Activated CD4-positive, alpha-beta memory T cell treated with anti-CD3 and anti-CD28 coated beads for 36 hours (primary cell): ENCODE measurements at regions of chr2 and their contacts with region 1.

Region 1: DNA sequence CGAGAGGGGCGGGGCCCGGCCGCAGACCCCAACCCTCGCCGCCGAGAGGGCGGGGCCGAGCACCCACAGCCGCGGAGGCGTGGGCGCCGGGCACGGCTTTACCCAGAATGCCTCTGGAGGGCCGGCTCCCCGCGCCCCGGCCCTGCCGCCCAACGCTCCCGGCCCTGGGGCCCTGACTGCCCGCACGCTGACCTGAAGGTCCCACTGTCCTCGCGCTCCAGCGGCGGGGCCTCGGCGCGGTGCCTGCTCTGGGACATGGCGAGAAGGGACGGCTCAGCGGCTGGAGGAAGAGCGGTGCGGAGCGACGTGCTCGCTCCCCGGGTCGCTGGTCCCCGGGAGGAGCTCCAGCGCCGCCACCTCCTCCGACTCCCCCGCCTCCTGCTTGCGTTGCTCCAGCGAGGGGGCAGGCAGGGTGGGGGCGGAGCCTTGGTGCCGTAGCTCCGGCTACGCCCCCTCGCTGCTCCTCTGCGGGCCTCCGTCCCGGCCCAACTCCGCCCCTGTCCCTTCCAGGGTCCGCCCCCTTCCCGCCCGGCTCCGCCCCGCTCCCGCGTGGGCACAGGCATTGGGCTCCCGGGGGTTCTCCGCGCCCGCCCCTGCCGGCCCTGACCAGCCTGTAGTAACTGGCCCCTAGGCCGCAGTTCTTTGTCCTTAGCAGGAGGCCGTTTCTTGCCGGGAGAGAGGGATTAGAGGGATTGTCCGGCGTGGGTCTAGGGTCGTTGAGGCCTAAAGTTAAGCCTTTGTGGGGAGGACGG is at the starts of genes PJVK and PRKRA:
- DNase-seq: peak; percentile 97
- H3K4me3 Mint-ChIP-seq: peak within 1 kb of the TSS; percentile 89
- H3K27ac Mint-ChIP-seq: peak within 1 kb of the TSS; percentile 95
- H3K4me1 Mint-ChIP-seq: peaks cover 24% of the 10 kb centered on the region
- H3K27me3 Mint-ChIP-seq: no peaks in the 10 kb centered on the region
- total RNA-seq, gene PJVK: 2.3 to 3.0 TPM
- total RNA-seq, gene PRKRA: 56.3 to 60.3 TPM

Region 2: GRCh38 chr2:178193823-178194599 is 256.9 kb before region 1 on chr2 and contains the start of gene OSBPL6:
- CTCF ChIA-PET with region 1: no interaction called
- POLR2A ChIA-PET with region 1: no interaction called
- intact Hi-C with region 1: loop called (anchors 2 kb)
- DNase-seq: peak; percentile 74
- H3K4me3 Mint-ChIP-seq: peak within 1 kb of the TSS; percentile 66
- H3K27ac Mint-ChIP-seq: no peak within 1 kb of the TSS
- H3K4me1 Mint-ChIP-seq: peaks cover 9% of the 10 kb centered on the region
- H3K27me3 Mint-ChIP-seq: peaks cover 51% of the 10 kb centered on the region
- total RNA-seq, gene OSBPL6: 1.5 to 1.9 TPM

Region 3: GRCh38 chr2:178514664-178515063 is 63.7 kb after region 1 on chr2:
- CTCF ChIA-PET with region 1: no interaction called
- POLR2A ChIA-PET with region 1: no interaction called
- intact Hi-C with region 1: loop called (anchors 2 kb)
- DNase-seq: peak; percentile 70
- H3K4me3 Mint-ChIP-seq: peak overlapping the region; percentile 36
- H3K27ac Mint-ChIP-seq: peak overlapping the region; percentile 87
- H3K4me1 Mint-ChIP-seq: peaks cover 27% of the 10 kb centered on the region
- H3K27me3 Mint-ChIP-seq: no peaks in the 10 kb centered on the region

Region 4: DNA sequence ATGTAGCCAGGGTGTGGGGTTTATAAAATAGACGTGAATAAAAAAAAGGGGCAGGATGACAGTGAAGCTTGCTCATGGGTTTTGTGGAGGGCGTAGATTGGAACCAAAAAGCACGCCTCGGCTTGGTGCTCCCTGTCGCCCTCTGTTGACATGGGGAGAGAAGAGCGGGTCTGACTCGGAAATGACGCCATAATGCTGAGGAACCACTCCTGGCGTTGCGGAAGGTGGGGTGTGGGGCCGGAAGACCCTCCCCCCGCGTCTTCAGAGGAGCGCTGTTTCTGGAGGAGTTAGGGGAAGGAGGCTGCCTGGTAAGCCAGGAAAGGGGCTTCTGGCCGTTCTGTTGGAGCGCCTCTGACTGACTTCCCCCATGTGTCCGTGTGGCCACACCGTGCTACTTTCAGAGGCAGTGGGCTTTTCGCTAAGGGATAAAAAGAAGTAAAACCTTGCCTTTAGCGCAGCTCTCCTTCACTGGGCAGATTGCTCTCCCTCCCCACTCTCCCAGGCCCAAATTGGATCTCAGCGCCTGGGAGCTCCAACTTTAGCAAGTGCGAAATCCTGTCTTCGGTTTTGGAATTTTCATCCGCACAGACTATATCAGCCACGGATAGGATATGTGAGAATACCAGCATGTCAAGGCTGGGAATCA is 72.1 kb after region 1 on chr2:
- CTCF ChIA-PET with region 1: interaction called, 5 read pairs
- POLR2A ChIA-PET with region 1: interaction called, 3 read pairs
- intact Hi-C with region 1: loop called (anchors 1 kb)
- DNase-seq: peak; percentile 92
- H3K4me3 Mint-ChIP-seq: peak overlapping the region; percentile 95
- H3K27ac Mint-ChIP-seq: peak overlapping the region; percentile 91
- H3K4me1 Mint-ChIP-seq: peaks cover 54% of the 10 kb centered on the region
- H3K27me3 Mint-ChIP-seq: no peaks in the 10 kb centered on the region

Region 5: DNA sequence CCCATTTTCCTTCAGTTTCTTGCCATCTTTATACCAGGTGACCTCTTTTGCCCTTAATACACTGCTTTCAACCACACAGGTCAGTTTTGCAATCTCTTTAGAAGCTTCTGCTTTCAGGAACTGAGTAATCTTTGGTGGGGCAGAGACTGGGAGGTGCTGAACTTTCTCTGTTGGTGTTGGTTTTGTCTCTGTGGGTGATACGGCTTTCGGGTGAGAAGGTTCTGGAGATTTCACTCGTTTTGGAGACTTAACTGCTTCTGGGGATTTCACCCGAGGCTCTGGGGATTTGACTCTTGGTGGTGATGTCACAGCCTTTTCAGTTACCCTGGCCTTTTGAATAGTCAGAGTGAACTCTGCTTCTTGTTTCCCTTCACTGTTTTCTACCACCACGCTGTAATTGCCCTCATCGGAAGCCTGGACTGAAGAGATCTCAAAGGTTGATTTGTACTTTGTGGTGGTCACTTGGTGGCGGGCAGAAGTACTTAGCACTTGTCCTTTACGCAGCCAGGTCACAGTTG is 79.7 kb after region 1 on chr2:
- CTCF ChIA-PET with region 1: no interaction called
- POLR2A ChIA-PET with region 1: interaction called, 3 read pairs
- intact Hi-C with region 1: loop called (anchors 2 kb)
- DNase-seq: peak; percentile 78
- H3K4me3 Mint-ChIP-seq: peak overlapping the region; percentile 9
- H3K27ac Mint-ChIP-seq: peak overlapping the region; percentile 65
- H3K4me1 Mint-ChIP-seq: peaks cover 45% of the 10 kb centered on the region
- H3K27me3 Mint-ChIP-seq: no peaks in the 10 kb centered on the region

Region 6: GRCh38 chr2:179059026-179059700 is 608.2 kb after region 1 on chr2:
- CTCF ChIA-PET with region 1: no interaction called
- POLR2A ChIA-PET with region 1: no interaction called
- intact Hi-C with region 1: no loop called
- DNase-seq: no peak
- H3K4me3 Mint-ChIP-seq: no peak overlapping the region
- H3K27ac Mint-ChIP-seq: no peak overlapping the region
- H3K4me1 Mint-ChIP-seq: no peaks in the 10 kb centered on the region
- H3K27me3 Mint-ChIP-seq: no peaks in the 10 kb centered on the region